Left ventricle myocardium superior (tissue), 1 donor: ENCODE measurements at regions of chr1 and their contacts with region 1.

Region 1: DNA sequence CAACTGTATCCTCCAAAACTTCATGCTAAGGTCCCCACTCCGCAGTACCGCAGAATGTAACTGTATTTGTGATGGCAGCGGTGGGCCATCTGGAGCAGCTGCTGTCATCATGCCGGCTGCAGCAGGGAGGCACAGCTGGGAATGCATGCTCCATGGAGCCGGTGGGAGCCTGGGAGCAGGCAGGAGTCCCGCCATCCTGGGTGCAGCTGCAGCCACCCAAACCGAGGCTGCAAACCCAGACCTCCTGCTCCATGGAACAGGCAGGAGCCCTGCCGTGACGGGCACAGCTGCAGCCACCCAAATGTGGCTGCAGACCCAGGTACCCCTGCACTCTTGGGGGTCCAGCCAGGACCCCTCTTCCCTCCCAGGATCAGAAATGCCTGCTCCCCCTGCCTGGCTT is 80.3 kb downstream of the SCMH1 start:
- DNase-seq: no peak
- ATAC-seq: no peak

Region 2: DNA sequence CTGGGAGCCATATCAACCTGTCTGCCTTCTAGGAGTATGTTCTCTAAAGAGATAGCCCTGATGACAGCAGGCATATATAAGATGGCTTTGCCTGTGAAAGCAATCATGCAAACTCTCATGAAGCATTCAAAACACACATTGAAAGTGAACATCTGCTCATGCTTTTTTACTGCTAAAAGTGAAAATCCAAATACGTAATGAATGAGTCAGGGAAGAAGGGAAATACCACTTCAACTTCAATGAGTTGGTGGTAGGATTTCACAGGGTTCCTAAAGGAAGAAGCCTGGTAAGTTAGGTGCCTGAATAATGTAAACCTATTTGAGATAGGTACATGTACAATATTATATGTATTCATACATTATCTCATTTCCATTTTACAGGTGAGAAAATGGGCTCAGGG is 89.8 kb before region 1 on chr1:
- intact Hi-C with region 1: no loop called
- DNase-seq: no peak
- ATAC-seq: no peak

Region 3: GRCh38 chr1:41222496-41222895 is 60.6 kb after region 1 on chr1:
- intact Hi-C with region 1: loop called (anchors 10 kb)
- DNase-seq: no peak
- ATAC-seq: peak; percentile 74